Transverse colon (tissue), 4 donors: ENCODE measurements at regions of chr10 and their contacts with region 1.

Region 1: GRCh38 chr10:35328404-35329037 is 7.8 kb upstream of the CCNY start:
- DNase-seq: no peak
- H3K4me3 ChIP-seq: no peak overlapping the region
- H3K27ac ChIP-seq: peak overlapping the region in 3 of 4 donors; percentile 19 to 46 (median 45)
- H3K4me1 ChIP-seq: peaks cover 4 to 22% (median 10%) of the 10 kb centered on the region in 4 donors
- H3K27me3 ChIP-seq: no peaks in the 10 kb centered on the region
- CTCF ChIP-seq: no peak
- EP300 ChIP-seq: no peak
- POLR2A ChIP-seq: no peak

Region 2: GRCh38 chr10:33341637-33342036 is 1986.9 kb before region 1 on chr10:
- in situ Hi-C with region 1: no loop called
- intact Hi-C with region 1: loop called (anchors 10 kb)
- DNase-seq: no peak
- H3K4me3 ChIP-seq: no peak overlapping the region
- H3K27ac ChIP-seq: no peak overlapping the region
- H3K4me1 ChIP-seq: peaks cover 4 to 30% (median 14%) of the 10 kb centered on the region in 4 donors
- H3K27me3 ChIP-seq: no peaks in the 10 kb centered on the region
- CTCF ChIP-seq: no peak
- EP300 ChIP-seq: no peak
- POLR2A ChIP-seq: no peak

Region 3: GRCh38 chr10:35126530-35127296 is 201.8 kb before region 1 on chr10 and contains the start of gene CREM:
- in situ Hi-C with region 1: no loop called
- intact Hi-C with region 1: no loop called
- DNase-seq: peak; percentile 100
- H3K4me3 ChIP-seq: peak within 1 kb of the TSS; percentile 67 to 85 (median 76)
- H3K27ac ChIP-seq: peak within 1 kb of the TSS; percentile 98 to 99 (median 98)
- H3K4me1 ChIP-seq: peaks cover 3 to 33% (median 8%) of the 10 kb centered on the region in 4 donors
- H3K27me3 ChIP-seq: no peaks in the 10 kb centered on the region
- CTCF ChIP-seq: peak; percentile 83 to 99 (median 93)
- EP300 ChIP-seq: peak; percentile 52
- POLR2A ChIP-seq: peak; percentile 98
- total RNA-seq, gene CREM: 2.8 to 99.9 (median 21.1) TPM